H1 (cell line): ENCODE measurements at regions of chr6 and their contacts with region 1.

Region 1: GRCh38 chr6:150079604-150080003 is 10.7 kb upstream of the ULBP3 start:
- DNase-seq: no peak
- H3K4me3 ChIP-seq: no peak overlapping the region
- H3K27ac ChIP-seq: no peak overlapping the region
- H3K4me1 ChIP-seq: peaks cover 0 to 3% (median 1%) of the 10 kb centered on the region in 4 experiments; a peak in 2 of 7 replicates
- H3K27me3 ChIP-seq: no peaks in the 10 kb centered on the region
- CTCF ChIP-seq: no peak
- EP300 ChIP-seq: no peak
- POLR2A ChIP-seq: no peak
- RAD21 ChIP-seq: no peak

Region 2: GRCh38 chr6:149963462-149964307 is 115.9 kb before region 1 on chr6 and contains the start of gene ULBP1:
- CTCF ChIA-PET with region 1: no interaction called
- POLR2A ChIA-PET with region 1: no interaction called
- DNase-seq: peak in 1 of 2 experiments; percentile 93
- H3K4me3 ChIP-seq: peak within 1 kb of the TSS; percentile 53 to 75 (median 58)
- H3K27ac ChIP-seq: no peak within 1 kb of the TSS
- H3K4me1 ChIP-seq: peaks cover 0 to 20% (median 17%) of the 10 kb centered on the region in 4 experiments; a peak in 5 of 7 replicates
- H3K27me3 ChIP-seq: peaks cover 42 to 85% (median 70%) of the 10 kb centered on the region in 4 experiments
- CTCF ChIP-seq: no peak
- EP300 ChIP-seq: no peak
- POLR2A ChIP-seq: peak in 1 of 2 experiments; percentile 78; a peak in 1 of 3 replicates
- RAD21 ChIP-seq: no peak
- total RNA-seq, gene ULBP1: 0.42 and 0.60 TPM in 2 replicates

Region 3: GRCh38 chr6:150068720-150069648 is 10.6 kb before region 1 on chr6 and contains the start of gene ULBP3:
- CTCF ChIA-PET with region 1: interaction called, 47 read pairs
- POLR2A ChIA-PET with region 1: no interaction called
- DNase-seq: peak; percentile 76 to 85
- H3K4me3 ChIP-seq: peak within 1 kb of the TSS; percentile 49 to 73 (median 60)
- H3K27ac ChIP-seq: no peak within 1 kb of the TSS
- H3K4me1 ChIP-seq: peaks cover 0 to 2% (median 0%) of the 10 kb centered on the region in 4 experiments; a peak in 2 of 7 replicates
- H3K27me3 ChIP-seq: peaks cover 0 to 22% (median 13%) of the 10 kb centered on the region in 4 experiments; a peak in 5 of 7 replicates
- CTCF ChIP-seq: peak; percentile 25 to 58 (median 51)
- EP300 ChIP-seq: no peak
- POLR2A ChIP-seq: peak in 1 of 2 experiments; percentile 56; a peak in 1 of 3 replicates
- RAD21 ChIP-seq: peak; percentile 38 to 53; a peak in 3 of 4 replicates
- total RNA-seq, gene ULBP3: 3.3 and 4.2 TPM in 2 replicates

Region 4: GRCh38 chr6:150325066-150325772 is 245.6 kb after region 1 on chr6:
- CTCF ChIA-PET with region 1: interaction called, 16 read pairs
- POLR2A ChIA-PET with region 1: no interaction called
- DNase-seq: no peak
- H3K4me3 ChIP-seq: no peak overlapping the region
- H3K27ac ChIP-seq: no peak overlapping the region
- H3K4me1 ChIP-seq: no peaks in the 10 kb centered on the region
- H3K27me3 ChIP-seq: no peaks in the 10 kb centered on the region
- CTCF ChIP-seq: no peak
- EP300 ChIP-seq: no peak
- POLR2A ChIP-seq: no peak
- RAD21 ChIP-seq: no peak

Region 5: GRCh38 chr6:150334790-150335783 is 255.5 kb after region 1 on chr6:
- CTCF ChIA-PET with region 1: interaction called, 10 read pairs
- POLR2A ChIA-PET with region 1: no interaction called
- DNase-seq: no peak
- H3K4me3 ChIP-seq: no peak overlapping the region
- H3K27ac ChIP-seq: no peak overlapping the region
- H3K4me1 ChIP-seq: no peaks in the 10 kb centered on the region
- H3K27me3 ChIP-seq: no peaks in the 10 kb centered on the region
- CTCF ChIP-seq: peak in 2 of 3 experiments; percentile 70 to 78; a peak in 3 of 4 replicates
- EP300 ChIP-seq: no peak
- POLR2A ChIP-seq: no peak
- RAD21 ChIP-seq: peak; percentile 86 to 88